Activated CD4-positive, alpha-beta T cell treated with anti-CD3 and anti-CD28 coated beads, Interleukin-2, amount 10 ng/mL, durations not matched to agents 24 days and 14 days (primary cell): ENCODE measurements at regions of chr10 and their contacts with region 1.

Region 1: DNA sequence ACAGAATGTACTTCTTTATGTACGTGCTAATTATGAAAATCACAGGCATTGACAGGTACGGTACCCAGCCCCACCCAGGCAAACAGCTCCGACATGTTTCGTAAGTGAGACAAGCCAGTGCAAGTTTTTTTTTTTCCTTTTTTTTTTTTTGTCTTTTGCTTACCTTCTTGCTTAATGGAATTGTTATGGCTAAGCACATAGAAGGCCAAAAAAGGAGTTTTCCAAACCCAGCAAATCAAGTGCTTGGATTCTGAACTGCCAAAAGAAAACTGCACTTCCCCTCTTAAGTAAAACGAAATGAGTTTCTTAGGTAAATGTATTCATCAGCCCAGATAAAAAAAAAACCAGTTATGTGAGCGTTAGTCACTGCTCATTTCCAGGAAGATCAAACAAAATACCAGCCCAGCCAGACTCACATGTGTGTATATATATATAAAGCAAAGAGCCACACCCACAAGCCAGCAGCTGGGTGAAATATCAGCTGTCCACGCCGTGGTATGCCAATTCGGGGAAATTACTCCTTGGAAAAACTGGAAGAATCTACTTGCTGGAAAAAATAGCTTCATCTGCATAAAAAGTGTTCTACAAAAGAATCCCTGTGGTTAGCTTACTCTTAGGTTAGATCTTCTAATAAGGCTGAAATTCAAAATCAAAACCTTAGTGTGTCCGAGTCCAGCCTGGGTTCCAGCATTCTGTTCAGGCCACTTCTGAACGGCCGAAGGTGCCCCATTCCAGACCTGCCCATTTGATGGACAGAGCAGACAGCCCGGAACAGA is 8.0 kb downstream of the KLF6 start:
- DNase-seq: peak; percentile 89
- H3K4me3 Mint-ChIP-seq: peak overlapping the region; percentile 76
- H3K27ac Mint-ChIP-seq: peak overlapping the region; percentile 86
- H3K4me1 Mint-ChIP-seq: peaks cover 61% of the 10 kb centered on the region
- H3K27me3 Mint-ChIP-seq: no peaks in the 10 kb centered on the region

Region 2: GRCh38 chr10:3239066-3239919 is 537.7 kb before region 1 on chr10:
- intact Hi-C with region 1: loop called (anchors 5 kb)
- DNase-seq: peak; percentile 92
- H3K4me3 Mint-ChIP-seq: no peak overlapping the region
- H3K27ac Mint-ChIP-seq: no peak overlapping the region
- H3K4me1 Mint-ChIP-seq: peaks cover 3% of the 10 kb centered on the region
- H3K27me3 Mint-ChIP-seq: peaks cover 49% of the 10 kb centered on the region

Region 3: DNA sequence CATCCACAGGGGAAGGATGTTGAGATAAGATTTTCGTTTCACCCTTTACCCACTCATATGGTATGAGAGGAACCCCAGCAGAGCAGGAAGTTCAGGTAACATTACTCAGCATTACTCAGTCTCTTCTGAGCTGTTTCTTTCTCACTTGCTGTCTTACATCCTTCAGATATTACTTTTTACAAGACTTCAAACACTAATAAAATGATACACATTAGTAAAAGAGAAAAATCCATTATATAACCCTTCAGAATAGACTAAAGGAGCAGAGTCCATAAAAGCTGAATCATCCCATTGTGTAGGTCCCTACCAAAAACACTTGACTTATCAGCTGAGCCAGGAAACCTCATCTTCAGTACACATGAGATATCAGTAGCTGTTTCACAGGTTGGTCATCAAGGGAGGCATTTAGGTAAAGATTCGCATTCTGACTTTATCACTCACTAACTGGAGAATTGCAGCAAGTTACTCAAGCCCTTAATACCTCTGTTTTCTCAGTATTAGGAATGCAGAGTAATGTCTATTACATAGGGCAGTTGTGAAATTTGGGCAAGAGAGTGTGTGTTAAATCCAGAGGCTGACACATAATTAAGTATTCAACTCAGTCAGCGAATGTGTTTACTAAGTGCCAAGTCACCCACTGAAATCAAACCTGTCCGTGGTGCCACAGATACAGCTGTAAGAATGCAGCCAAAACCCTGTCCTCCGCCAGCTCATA is 36.7 kb before region 1 on chr10:
- intact Hi-C with region 1: loop called (anchors 1 kb)
- DNase-seq: no peak
- H3K4me3 Mint-ChIP-seq: no peak overlapping the region
- H3K27ac Mint-ChIP-seq: peak overlapping the region; percentile 57
- H3K4me1 Mint-ChIP-seq: peaks cover 25% of the 10 kb centered on the region
- H3K27me3 Mint-ChIP-seq: no peaks in the 10 kb centered on the region